Panc1 (cell line): ENCODE measurements at regions of chr3 and their contacts with region 1.

Region 1: DNA sequence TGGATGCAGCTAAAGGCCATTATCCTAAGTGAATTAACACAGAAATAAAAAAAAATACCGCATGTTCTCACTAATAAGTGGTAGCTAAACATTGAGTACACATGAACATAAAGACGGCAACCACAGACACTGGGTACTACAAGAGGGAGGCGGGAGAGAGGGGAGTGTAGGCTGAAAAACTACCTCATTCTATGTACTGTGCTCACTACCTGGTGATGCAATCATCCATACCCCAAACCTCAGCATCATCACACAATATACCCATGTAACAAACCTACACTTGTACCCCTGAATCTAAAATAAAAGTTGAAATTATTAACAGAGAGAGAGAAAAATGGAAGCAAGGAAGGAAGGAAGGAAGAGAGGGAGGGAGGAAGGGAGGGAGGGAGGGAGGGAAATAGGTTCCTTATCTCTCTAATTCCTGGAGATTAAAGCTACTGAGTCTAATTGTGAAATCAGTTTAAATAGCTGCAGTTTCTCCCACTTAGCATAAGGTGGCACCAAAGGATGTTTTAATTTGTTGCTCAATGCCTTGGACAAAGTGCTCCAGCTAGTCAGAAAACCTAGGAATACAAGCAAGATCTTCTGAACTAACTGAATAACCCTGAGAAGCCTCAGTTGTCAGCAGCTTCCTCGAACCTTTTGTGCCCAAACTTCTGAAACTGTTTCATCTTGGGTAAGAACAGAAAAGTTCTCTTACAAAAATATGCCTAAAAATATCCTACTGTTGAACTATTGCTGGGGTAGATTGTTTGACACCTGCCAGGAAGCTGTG is 79.4 kb upstream of the ATP11B start:
- DNase-seq: peak; percentile 47
- ATAC-seq: peak; percentile 89
- H3K4me3 ChIP-seq: no peak overlapping the region
- H3K27ac ChIP-seq: no peak overlapping the region
- H3K4me1 ChIP-seq: no peaks in the 10 kb centered on the region
- H3K27me3 ChIP-seq: no peaks in the 10 kb centered on the region
- CTCF ChIP-seq: peak; percentile 78

Region 2: DNA sequence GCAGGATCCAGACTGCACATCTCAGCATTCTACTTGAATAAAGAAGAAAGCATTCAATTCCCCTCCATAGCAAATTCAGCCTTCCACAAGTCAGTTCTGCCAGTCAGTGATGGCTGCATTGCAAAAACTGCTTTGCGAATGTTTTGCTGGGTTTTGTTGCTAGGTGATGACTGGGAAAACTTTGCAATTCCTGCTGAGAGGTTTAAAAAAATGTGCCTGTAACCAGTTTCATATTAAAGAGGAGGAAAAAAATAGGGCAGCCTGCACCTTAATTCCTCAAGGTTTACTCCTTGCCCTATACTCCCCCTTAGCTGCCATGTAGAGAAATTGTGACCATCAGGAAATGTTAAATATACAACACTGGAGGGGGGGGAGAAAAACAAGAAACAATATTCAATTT is 146.2 kb before region 1 on chr3:
- CTCF ChIA-PET with region 1: no interaction called
- POLR2A ChIA-PET with region 1: no interaction called
- in situ Hi-C with region 1: no loop called
- intact Hi-C with region 1: no loop called
- DNase-seq: no peak
- ATAC-seq: no peak
- H3K4me3 ChIP-seq: no peak overlapping the region
- H3K27ac ChIP-seq: no peak overlapping the region
- H3K4me1 ChIP-seq: no peaks in the 10 kb centered on the region
- H3K27me3 ChIP-seq: no peaks in the 10 kb centered on the region
- CTCF ChIP-seq: no peak

Region 3: GRCh38 chr3:182837855-182838454 is 124.0 kb after region 1 on chr3:
- CTCF ChIA-PET with region 1: interaction called, 7 read pairs
- POLR2A ChIA-PET with region 1: no interaction called
- in situ Hi-C with region 1: no loop called
- intact Hi-C with region 1: loop called (anchors 1 kb)
- DNase-seq: no peak
- ATAC-seq: no peak
- H3K4me3 ChIP-seq: no peak overlapping the region
- H3K27ac ChIP-seq: no peak overlapping the region
- H3K4me1 ChIP-seq: no peaks in the 10 kb centered on the region
- H3K27me3 ChIP-seq: no peaks in the 10 kb centered on the region
- CTCF ChIP-seq: peak; percentile 60; the same call in 1 of the 2 replicates

Region 4: GRCh38 chr3:182909318-182910040 is 195.5 kb after region 1 on chr3:
- CTCF ChIA-PET with region 1: no interaction called
- POLR2A ChIA-PET with region 1: no interaction called
- in situ Hi-C with region 1: no loop called
- intact Hi-C with region 1: loop called (anchors 10 kb)
- DNase-seq: no peak
- ATAC-seq: 0 out of 2 replicates have a peak, but pooled peaks have one; percentile 34
- H3K4me3 ChIP-seq: no peak overlapping the region
- H3K27ac ChIP-seq: no peak overlapping the region
- H3K4me1 ChIP-seq: no peaks in the 10 kb centered on the region
- H3K27me3 ChIP-seq: no peaks in the 10 kb centered on the region
- CTCF ChIP-seq: peak; percentile 73